Calu3 (cell line): ENCODE measurements at regions of chr2 and their contacts with region 1.

Region 1: GRCh38 chr2:173354601-173355131 is at the start of gene CDCA7:
- DNase-seq: peak; percentile 90
- H3K4me3 Mint-ChIP-seq: peak within 1 kb of the TSS; percentile 93
- H3K27ac Mint-ChIP-seq: peak within 1 kb of the TSS; percentile 80
- H3K4me1 Mint-ChIP-seq: peaks cover 40% of the 10 kb centered on the region
- H3K27me3 Mint-ChIP-seq: peaks cover 18% of the 10 kb centered on the region
- CTCF ChIP-seq: no peak
- total RNA-seq, gene CDCA7: 39.0 and 48.2 TPM in 2 replicates

Region 2: GRCh38 chr2:173033084-173033483 is 321.6 kb before region 1 on chr2:
- CTCF ChIA-PET with region 1: no interaction called
- intact Hi-C with region 1: no loop called
- DNase-seq: no peak
- H3K4me3 Mint-ChIP-seq: no peak overlapping the region
- H3K27ac Mint-ChIP-seq: no peak overlapping the region
- H3K4me1 Mint-ChIP-seq: no peaks in the 10 kb centered on the region
- H3K27me3 Mint-ChIP-seq: no peaks in the 10 kb centered on the region
- CTCF ChIP-seq: no peak

Region 3: GRCh38 chr2:173151671-173152398 is 202.8 kb before region 1 on chr2:
- CTCF ChIA-PET with region 1: no interaction called
- intact Hi-C with region 1: no loop called
- DNase-seq: no peak
- H3K4me3 Mint-ChIP-seq: no peak overlapping the region
- H3K27ac Mint-ChIP-seq: peak overlapping the region; percentile 39
- H3K4me1 Mint-ChIP-seq: peaks cover 17% of the 10 kb centered on the region
- H3K27me3 Mint-ChIP-seq: no peaks in the 10 kb centered on the region
- CTCF ChIP-seq: no peak

Region 4: GRCh38 chr2:173226899-173227698 is 127.6 kb before region 1 on chr2:
- CTCF ChIA-PET with region 1: no interaction called
- intact Hi-C with region 1: loop called (anchors 2 kb)
- DNase-seq: peak; percentile 19
- H3K4me3 Mint-ChIP-seq: no peak overlapping the region
- H3K27ac Mint-ChIP-seq: no peak overlapping the region
- H3K4me1 Mint-ChIP-seq: peaks cover 22% of the 10 kb centered on the region
- H3K27me3 Mint-ChIP-seq: no peaks in the 10 kb centered on the region
- CTCF ChIP-seq: no peak

Region 5: DNA sequence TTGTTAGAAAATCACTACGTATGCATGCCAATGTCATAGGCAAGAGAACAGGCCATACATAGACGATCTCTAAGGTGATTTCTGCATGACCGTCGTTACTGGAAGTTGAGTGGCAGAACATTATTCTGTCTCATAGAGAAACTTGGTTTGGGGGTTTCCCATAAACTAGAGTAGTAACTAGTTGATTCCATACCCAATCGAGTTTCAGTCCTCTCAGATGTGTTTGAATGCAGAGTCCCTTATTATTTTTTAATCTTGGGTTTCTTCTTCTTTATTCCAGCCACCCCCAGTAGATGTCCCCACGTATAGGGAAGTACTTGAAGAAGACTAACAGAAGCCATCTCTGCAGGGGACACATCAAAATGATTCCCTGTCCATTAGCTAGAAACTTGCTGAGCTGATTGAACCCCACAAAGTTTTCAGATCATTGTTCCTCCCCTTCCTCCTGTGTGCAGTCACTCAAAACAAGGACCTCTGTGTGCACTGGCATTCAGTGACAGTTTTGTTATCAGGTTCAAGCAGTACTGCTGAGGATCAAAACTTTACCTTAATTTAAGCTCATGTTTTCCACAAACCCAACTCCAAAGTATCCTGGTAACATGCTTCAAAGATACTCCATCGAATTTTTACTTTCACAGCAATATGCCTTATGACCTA is 68.4 kb before region 1 on chr2:
- CTCF ChIA-PET with region 1: interaction called, 6 read pairs
- intact Hi-C with region 1: loop called (anchors 10 kb)
- DNase-seq: peak; percentile 16
- H3K4me3 Mint-ChIP-seq: no peak overlapping the region
- H3K27ac Mint-ChIP-seq: no peak overlapping the region
- H3K4me1 Mint-ChIP-seq: no peaks in the 10 kb centered on the region
- H3K27me3 Mint-ChIP-seq: no peaks in the 10 kb centered on the region
- CTCF ChIP-seq: peak; percentile 17

Region 6: DNA sequence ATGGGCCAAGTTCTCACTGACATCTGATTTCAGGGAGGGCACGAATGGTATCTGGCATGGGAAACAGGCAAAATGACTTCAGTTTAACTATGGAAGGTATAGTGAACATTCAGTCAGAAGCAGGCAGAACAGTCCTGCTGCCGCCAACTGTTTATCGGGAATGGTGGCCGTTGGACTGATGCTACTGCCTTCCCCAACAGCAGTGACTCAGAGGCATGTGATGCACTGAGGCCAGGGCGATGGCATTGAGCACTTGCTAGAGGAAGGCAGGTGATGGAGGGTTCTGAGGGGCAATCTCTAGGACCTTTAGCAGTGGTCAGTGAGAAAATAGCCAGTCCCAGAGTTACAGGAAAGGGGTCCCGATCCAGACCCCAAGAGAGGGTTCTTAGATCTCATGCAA is 149.7 kb after region 1 on chr2:
- CTCF ChIA-PET with region 1: no interaction called
- intact Hi-C with region 1: no loop called
- DNase-seq: no peak
- H3K4me3 Mint-ChIP-seq: no peak overlapping the region
- H3K27ac Mint-ChIP-seq: no peak overlapping the region
- H3K4me1 Mint-ChIP-seq: no peaks in the 10 kb centered on the region
- H3K27me3 Mint-ChIP-seq: peaks cover 15% of the 10 kb centered on the region
- CTCF ChIP-seq: no peak

Region 7: DNA sequence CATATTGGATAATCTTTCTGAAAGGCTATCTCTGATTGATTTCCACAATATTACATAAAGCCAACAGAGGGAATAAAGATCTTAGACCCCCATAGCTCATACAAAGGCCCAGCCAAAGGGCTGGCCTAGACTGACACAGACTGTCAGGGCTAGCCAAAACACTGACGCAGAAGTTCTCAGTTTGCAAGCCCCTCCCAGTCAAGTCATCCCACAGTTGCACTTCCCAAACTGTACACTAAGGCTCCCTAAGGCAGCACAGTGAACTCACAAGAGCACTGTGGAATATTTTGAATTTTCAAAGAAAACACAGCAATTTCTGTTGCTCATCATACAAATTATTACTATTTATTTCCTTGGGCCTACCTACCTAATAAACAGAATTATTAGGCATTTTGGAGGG is 365.6 kb after region 1 on chr2:
- CTCF ChIA-PET with region 1: no interaction called
- intact Hi-C with region 1: no loop called
- DNase-seq: no peak
- H3K4me3 Mint-ChIP-seq: no peak overlapping the region
- H3K27ac Mint-ChIP-seq: no peak overlapping the region
- H3K4me1 Mint-ChIP-seq: no peaks in the 10 kb centered on the region
- H3K27me3 Mint-ChIP-seq: no peaks in the 10 kb centered on the region
- CTCF ChIP-seq: no peak